Heart left ventricle (tissue), 16 donors: ENCODE measurements at regions of chr1 and their contacts with region 1.

Region 1: GRCh38 chr1:17125756-17126237 is 6.5 kb upstream of the PADI2 start:
- DNase-seq: peak; percentile 81 to 93 (median 86)
- ATAC-seq: peak; percentile 60 to 87 (median 84)
- H3K4me3 ChIP-seq: no peak overlapping the region
- H3K27ac ChIP-seq: no peak overlapping the region
- H3K4me1 ChIP-seq: peaks cover 0 to 34% (median 2%) of the 10 kb centered on the region in 12 donors
- H3K27me3 ChIP-seq: peaks cover 0 to 5% (median 0%) of the 10 kb centered on the region in 9 donors
- CTCF ChIP-seq: peak; percentile 84 to 97 (median 94)
- POLR2A ChIP-seq: no peak

Region 2: DNA sequence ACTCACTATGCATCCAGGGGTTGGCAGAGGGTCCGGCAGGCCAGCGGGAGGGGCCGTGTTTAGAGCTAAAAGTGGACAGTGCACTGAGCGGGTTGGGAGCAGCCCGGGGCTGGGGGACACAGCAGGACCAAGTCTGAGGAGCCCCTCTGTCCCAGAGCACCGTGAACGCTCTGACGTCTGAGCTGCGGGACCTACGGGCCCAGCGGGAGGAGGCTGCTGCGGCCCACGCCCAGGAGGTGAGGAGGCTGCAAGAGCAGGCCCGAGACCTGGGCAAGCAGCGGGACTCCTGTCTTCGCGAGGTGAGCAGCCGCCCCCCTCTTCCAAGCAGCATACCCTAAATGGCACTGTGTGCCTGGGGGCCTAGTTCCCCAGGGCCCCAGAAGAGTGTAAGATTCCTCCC is 171.2 kb before region 1 on chr1:
- intact Hi-C with region 1: loop called in 2 of 10 experiments (anchors 5 to 10 kb)
- DNase-seq: no peak
- ATAC-seq: no peak
- H3K4me3 ChIP-seq: no peak overlapping the region
- H3K27ac ChIP-seq: no peak overlapping the region
- H3K4me1 ChIP-seq: peaks cover 0 to 6% (median 0%) of the 10 kb centered on the region in 12 donors
- H3K27me3 ChIP-seq: no peaks in the 10 kb centered on the region
- CTCF ChIP-seq: no peak
- POLR2A ChIP-seq: no peak

Region 3: DNA sequence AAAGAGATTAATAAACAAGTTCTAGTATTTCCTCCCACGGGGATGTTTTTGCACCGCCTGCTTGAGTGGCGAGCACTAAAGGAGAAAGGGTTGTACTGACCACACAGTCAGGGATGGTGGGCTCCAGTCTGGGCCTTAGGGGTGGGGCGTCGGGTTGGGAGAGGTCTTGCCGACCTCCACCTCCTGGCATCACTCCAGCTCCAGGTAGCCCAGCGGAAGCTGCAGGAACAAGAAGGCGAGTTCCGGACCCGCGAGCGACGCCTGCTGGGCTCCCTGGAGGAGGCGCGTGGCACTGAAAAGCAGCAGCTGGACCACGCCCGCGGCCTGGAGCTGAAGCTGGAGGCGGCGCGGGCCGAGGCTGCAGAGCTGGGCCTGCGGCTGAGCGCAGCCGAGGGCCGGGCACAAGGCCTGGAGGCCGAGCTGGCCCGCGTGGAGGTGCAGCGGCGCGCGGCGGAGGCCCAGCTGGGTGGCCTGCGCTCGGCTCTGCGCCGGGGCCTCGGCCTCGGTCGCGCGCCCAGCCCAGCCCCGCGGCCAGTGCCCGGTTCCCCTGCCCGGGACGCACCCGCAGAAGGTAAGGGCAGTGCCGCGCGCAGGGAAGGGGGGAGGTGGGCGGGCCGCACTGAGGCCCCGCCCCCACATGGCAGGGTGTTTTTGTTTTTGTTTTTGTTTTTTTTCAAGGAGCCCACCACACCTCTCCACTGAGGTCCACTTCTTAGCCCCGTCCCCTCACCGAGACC is 165.1 kb before region 1 on chr1:
- intact Hi-C with region 1: loop called in 1 of 10 experiments (anchors 10 kb)
- DNase-seq: peak; percentile 79 to 88 (median 86)
- ATAC-seq: peak; percentile 41 to 91 (median 78)
- H3K4me3 ChIP-seq: peak overlapping the region in 10 of 12 donors; percentile 22 to 58 (median 48)
- H3K27ac ChIP-seq: peak overlapping the region in 4 of 12 donors; percentile 27 to 59 (median 41)
- H3K4me1 ChIP-seq: peaks cover 0 to 15% (median 2%) of the 10 kb centered on the region in 12 donors
- H3K27me3 ChIP-seq: no peaks in the 10 kb centered on the region
- CTCF ChIP-seq: peak; percentile 13 to 74 (median 60)
- POLR2A ChIP-seq: no peak

Region 4: GRCh38 chr1:17059739-17060460 is 65.9 kb before region 1 on chr1:
- intact Hi-C with region 1: loop called in 3 of 10 experiments (anchors 5 to 10 kb)
- DNase-seq: peak; percentile 50 to 83 (median 55)
- ATAC-seq: peak; percentile 78 to 90 (median 88)
- H3K4me3 ChIP-seq: no peak overlapping the region
- H3K27ac ChIP-seq: peak overlapping the region in 1 of 12 donors; percentile 38
- H3K4me1 ChIP-seq: peaks cover 0 to 20% (median 2%) of the 10 kb centered on the region in 12 donors
- H3K27me3 ChIP-seq: no peaks in the 10 kb centered on the region
- CTCF ChIP-seq: peak; percentile 45 to 72 (median 64)
- POLR2A ChIP-seq: no peak

Region 5: DNA sequence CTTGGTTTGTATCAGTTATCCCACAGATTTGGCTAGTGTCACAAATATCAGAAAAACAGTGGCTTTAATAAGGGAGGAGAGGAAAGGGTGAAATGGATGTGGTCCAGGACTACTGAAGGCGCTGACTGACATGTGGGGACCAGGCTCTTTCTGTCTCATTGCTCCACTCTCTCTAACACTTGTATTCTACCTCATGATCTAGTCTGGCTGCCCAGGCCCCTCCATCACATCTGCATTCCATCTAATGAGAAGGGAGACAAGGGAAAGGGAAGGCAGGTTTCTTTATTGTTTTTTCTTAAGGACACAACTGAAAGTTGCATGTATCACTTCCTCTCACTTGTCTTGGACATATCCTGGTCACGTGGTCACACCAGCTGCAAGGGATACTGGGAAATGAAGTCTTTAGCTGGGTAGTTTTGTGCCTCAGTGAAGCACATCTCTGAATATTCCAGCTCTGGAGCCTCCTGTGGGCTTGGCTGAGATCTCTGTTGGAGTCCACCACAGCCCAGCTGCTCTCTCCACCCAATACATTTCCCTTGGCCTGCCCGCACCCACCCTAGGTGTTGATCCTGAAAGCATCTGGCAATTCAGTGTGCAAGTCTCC is 35.4 kb after region 1 on chr1:
- intact Hi-C with region 1: no loop called
- DNase-seq: no peak
- ATAC-seq: no peak
- H3K4me3 ChIP-seq: no peak overlapping the region
- H3K27ac ChIP-seq: no peak overlapping the region
- H3K4me1 ChIP-seq: no peaks in the 10 kb centered on the region
- H3K27me3 ChIP-seq: peaks cover 0 to 5% (median 0%) of the 10 kb centered on the region in 9 donors
- CTCF ChIP-seq: no peak
- POLR2A ChIP-seq: no peak

Region 6: DNA sequence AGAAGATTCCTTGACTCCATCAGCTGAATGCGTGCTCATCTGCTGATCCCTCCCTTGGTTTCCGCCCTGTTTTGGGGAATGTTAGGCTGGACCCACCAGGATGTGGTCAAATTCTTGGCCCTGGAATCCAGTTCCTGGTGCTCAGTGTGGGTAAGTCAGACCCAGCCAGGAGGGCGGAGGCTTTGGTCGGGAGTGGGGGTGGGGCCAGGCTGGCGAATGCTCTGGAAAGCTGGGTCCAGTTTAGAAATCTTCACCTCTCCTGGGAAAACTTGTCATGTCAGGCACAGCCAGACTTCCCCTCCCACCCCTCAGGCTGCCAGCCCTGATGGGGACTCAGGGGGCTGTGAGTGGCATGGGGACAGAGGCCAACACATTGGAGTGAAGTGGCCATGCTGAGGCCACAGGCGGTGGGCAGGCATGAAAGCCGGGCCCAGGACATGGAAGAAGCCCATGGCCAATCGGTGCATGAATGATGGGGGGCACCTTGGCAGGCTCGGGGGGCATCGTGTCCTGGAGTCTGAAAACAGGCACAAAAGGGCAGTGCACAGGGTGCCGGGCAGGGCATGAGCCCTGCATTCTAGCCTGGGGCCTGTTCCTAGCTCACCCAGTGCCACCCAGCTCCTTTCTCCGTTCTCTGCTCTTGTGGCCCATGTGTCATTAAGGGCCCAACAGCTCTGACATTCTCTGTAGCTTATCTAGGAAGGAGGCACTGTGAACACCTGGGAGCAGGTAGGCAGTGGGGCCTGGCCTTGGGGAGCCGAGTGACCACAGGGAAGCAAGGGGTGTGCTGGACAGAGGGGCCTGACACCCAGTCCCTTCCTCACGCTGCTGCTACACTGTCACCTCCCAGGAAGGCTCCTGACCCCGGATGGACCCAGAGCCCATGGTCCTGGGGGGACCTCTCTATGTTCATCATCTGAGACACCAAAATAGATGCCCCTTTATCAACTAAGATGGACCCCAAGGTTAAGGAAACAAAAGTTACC is 64.5 kb after region 1 on chr1:
- intact Hi-C with region 1: no loop called
- DNase-seq: peak in 2 of 5 donors; percentile 4 to 32
- ATAC-seq: no peak
- H3K4me3 ChIP-seq: no peak overlapping the region
- H3K27ac ChIP-seq: no peak overlapping the region
- H3K4me1 ChIP-seq: no peaks in the 10 kb centered on the region
- H3K27me3 ChIP-seq: peaks cover 0 to 18% (median 0%) of the 10 kb centered on the region in 9 donors
- CTCF ChIP-seq: no peak
- POLR2A ChIP-seq: no peak

Region 7: GRCh38 chr1:17236779-17237560 is 111.2 kb after region 1 on chr1:
- intact Hi-C with region 1: loop called (anchors 1 to 2 kb)
- DNase-seq: peak; percentile 79 to 89 (median 81)
- ATAC-seq: peak; percentile 64 to 86 (median 84)
- H3K4me3 ChIP-seq: no peak overlapping the region
- H3K27ac ChIP-seq: no peak overlapping the region
- H3K4me1 ChIP-seq: peaks cover 0 to 9% (median 0%) of the 10 kb centered on the region in 12 donors
- H3K27me3 ChIP-seq: peaks cover 0 to 44% (median 6%) of the 10 kb centered on the region in 9 donors
- CTCF ChIP-seq: peak; percentile 75 to 91 (median 84)
- POLR2A ChIP-seq: no peak

Region 8: GRCh38 chr1:17335821-17336710 is 210.3 kb after region 1 on chr1:
- intact Hi-C with region 1: loop called in 7 of 10 experiments (anchors 5 to 10 kb)
- DNase-seq: peak; percentile 37 to 80 (median 55)
- ATAC-seq: peak in 2 of 4 donors; percentile 52 to 55
- H3K4me3 ChIP-seq: no peak overlapping the region
- H3K27ac ChIP-seq: no peak overlapping the region
- H3K4me1 ChIP-seq: no peaks in the 10 kb centered on the region
- H3K27me3 ChIP-seq: peaks cover 0 to 43% (median 0%) of the 10 kb centered on the region in 9 donors
- CTCF ChIP-seq: peak; percentile 49 to 80 (median 67)
- POLR2A ChIP-seq: no peak

Region 9: DNA sequence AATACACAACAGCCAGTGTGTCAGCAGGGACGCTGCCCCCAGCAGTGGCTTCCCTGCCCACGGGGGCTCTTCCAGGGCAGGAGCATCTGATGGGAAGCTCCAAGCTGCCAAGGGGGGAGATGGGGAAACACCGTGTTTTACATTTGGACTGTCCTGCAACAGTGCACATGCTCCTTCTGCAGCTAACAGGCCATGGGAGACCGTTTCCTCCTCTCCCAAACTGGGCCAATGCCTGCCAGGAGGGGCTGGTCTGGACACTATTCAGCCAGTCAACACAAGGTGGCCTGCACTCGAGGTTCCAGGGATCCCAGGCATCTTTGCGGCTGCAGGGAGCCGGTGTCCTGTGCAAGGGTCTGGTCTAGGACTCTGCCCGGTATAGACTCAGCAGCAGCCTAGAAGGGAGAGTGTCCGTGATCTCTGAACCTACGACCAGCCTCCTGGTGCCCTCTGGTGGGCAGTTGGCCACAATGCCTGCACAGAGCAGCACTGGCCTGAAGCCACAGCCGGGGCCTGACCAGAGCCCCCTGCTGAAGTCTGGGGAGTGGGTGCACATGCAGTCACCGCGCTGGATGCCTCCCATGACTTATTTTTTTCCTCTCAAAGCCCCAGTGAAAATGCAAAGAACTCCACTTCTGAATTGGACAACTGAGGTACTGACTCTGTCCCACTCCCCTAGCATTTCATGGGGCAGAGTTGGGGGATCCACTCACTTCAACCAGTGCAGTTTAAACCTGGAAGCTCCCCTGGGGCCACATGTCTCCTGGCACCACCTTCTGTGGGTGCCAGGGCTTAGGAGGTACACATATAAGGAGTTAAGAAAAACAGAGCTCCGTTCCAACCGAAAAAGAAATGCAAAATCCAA is 280.3 kb after region 1 on chr1:
- intact Hi-C with region 1: loop called in 7 of 10 experiments (anchors 2 to 10 kb)
- DNase-seq: peak; percentile 47 to 79 (median 59)
- ATAC-seq: peak; percentile 55 to 86 (median 82)
- H3K4me3 ChIP-seq: no peak overlapping the region
- H3K27ac ChIP-seq: no peak overlapping the region
- H3K4me1 ChIP-seq: peaks cover 0 to 6% (median 0%) of the 10 kb centered on the region in 12 donors
- H3K27me3 ChIP-seq: no peaks in the 10 kb centered on the region
- CTCF ChIP-seq: peak; percentile 49 to 74 (median 69)
- POLR2A ChIP-seq: no peak